Activated CD8-positive, alpha-beta memory T cell treated with anti-CD3 and anti-CD28 coated beads, Interleukin-2, amount 10 ng/mL, durations not matched to agents 7 days and 5 days (primary cell): ENCODE measurements at regions of chr15 and their contacts with region 1.

Region 1: DNA sequence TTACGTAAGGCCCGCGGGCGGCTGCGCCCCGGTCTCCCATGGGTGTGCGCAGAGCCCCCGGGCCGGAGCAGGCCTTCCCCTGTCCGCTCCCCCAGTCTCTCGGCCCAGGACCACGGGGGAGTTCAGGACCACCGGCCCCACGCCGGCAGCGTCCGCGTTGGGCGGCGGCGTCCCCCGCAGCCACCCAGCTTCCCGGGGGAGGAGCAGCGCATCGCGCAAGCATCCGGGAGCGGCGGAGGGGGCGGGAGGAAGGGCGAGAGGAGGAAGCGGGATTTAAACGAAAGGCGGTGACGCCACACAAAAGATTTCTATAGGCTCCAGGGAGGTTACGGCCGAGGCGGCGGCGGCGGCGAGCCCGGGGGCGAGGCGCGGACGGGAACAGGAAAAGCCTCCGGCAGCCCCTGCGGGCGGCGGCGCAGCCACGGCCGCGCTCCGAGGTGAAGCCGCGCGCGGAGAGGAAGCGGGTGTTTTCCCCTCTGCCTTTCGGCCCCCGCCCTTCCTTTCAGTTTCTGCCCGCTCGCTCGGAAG is at the start of gene TLNRD1:
- DNase-seq: peak; percentile 91
- ATAC-seq: peak; percentile 74
- H3K4me3 Mint-ChIP-seq: peak within 1 kb of the TSS; percentile 94
- H3K27ac Mint-ChIP-seq: peak within 1 kb of the TSS; percentile 96
- H3K4me1 Mint-ChIP-seq: peaks cover 51% of the 10 kb centered on the region
- H3K27me3 Mint-ChIP-seq: no peaks in the 10 kb centered on the region
- total RNA-seq, gene TLNRD1: 31.2 to 32.3 TPM

Region 2: DNA sequence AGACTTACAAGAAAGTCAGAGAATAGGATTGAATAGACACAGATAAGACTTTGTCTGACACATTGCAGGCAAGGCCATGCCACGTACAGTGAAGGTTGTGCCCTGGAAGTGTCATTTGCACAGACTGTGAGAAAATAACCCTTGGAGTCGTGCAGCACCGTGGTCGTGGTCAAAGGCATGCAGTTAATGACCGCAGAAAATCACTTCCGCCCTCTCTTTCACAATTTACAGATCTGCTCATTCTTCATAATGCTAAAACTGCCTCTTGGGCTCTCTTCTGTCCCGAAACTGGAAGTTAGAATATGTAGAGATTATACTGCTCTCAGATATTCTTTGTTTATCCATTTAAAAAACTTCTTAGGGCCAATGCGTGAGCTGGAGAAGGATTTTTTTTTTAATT is 675.5 kb before region 1 on chr15:
- CTCF ChIA-PET with region 1: no interaction called
- DNase-seq: no peak
- ATAC-seq: no peak
- H3K4me3 Mint-ChIP-seq: no peak overlapping the region
- H3K27ac Mint-ChIP-seq: no peak overlapping the region
- H3K4me1 Mint-ChIP-seq: no peaks in the 10 kb centered on the region
- H3K27me3 Mint-ChIP-seq: peaks cover 16% of the 10 kb centered on the region

Region 3: DNA sequence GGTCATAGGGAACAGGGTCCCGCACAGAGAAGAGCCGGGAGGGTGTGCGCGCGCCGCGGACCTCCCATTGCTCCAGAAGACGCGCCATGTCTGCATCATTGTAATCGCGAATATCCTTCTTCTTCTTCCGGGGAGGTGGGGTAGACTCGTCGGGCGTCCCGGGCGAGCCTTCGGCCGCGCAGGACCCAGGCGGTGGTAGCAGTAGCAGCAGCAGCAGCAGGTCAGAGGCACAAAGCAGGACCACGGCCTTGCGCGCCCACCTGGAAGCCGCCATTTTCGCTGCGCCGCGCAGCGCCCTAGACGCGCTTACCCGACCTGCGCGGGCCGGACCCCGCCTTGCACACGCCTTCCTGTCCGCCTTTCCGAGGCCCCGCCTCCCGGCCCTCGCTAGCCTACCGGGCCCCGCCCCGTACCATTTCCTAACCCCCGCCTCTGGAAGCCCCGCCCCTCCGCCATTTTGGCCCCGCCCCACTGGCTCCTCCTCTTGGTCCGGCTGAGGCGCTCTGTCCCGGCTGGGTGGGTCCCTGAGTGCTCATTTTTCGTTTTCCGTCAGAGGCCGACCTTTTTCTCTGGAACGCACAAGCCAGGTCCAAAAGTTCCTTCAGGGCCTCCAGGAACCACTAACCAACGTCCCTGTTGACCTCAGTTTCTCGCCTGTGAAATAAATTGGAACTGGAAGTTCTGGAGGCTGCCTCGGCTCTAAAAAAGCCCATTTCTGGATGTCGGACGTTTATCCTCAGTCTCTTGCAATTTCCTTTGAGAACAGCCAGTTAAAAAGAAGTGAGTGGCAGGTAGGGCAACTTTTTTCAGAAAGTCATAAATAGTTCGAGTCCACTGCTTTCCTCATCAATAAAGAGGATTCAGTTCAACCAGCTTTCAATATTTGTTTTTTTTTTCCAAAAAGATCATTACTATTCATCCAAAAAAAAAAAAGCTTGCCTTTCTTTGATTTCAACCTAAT is 10.9 kb before region 1 on chr15 and contains the start of gene MESD:
- CTCF ChIA-PET with region 1: interaction called, 14 read pairs
- DNase-seq: peak; percentile 98
- ATAC-seq: peak; percentile 99
- H3K4me3 Mint-ChIP-seq: peak within 1 kb of the TSS; percentile 100
- H3K27ac Mint-ChIP-seq: peak within 1 kb of the TSS; percentile 96
- H3K4me1 Mint-ChIP-seq: peaks cover 58% of the 10 kb centered on the region
- H3K27me3 Mint-ChIP-seq: no peaks in the 10 kb centered on the region
- total RNA-seq, gene MESD: 27.6 to 27.8 TPM

Region 4: DNA sequence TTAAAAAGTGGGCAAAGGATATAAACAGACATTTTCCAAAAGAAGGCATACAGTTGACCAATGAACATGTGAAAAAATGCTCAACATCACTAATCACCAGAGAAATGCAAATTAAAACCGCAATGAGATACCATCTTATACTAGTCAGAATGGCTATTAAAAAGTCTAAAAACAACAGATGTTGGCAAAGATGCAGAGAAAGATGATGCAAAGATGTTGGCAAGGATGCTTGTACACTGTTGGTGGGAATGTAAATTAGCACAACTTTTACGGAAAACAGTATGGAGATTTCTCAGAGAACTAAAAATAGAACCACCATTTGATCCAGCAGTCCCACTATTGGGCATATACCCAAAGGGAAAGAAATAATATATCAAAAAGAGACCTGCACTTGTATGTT is 53.5 kb after region 1 on chr15:
- CTCF ChIA-PET with region 1: no interaction called
- DNase-seq: no peak
- ATAC-seq: no peak
- H3K4me3 Mint-ChIP-seq: no peak overlapping the region
- H3K27ac Mint-ChIP-seq: no peak overlapping the region
- H3K4me1 Mint-ChIP-seq: peaks cover 22% of the 10 kb centered on the region
- H3K27me3 Mint-ChIP-seq: peaks cover 13% of the 10 kb centered on the region

Region 5: GRCh38 chr15:81106560-81106959 is 105.9 kb after region 1 on chr15:
- CTCF ChIA-PET with region 1: interaction called, 14 read pairs
- DNase-seq: peak; percentile 57
- ATAC-seq: peak; percentile 51
- H3K4me3 Mint-ChIP-seq: no peak overlapping the region
- H3K27ac Mint-ChIP-seq: no peak overlapping the region
- H3K4me1 Mint-ChIP-seq: peaks cover 13% of the 10 kb centered on the region
- H3K27me3 Mint-ChIP-seq: peaks cover 59% of the 10 kb centered on the region